CD4-positive, alpha-beta memory T cell (primary cell): ENCODE measurements at regions of chr3 and their contacts with region 1.

Region 1: GRCh38 chr3:16550676-16551341 is 37.3 kb upstream of the RFTN1 start:
- DNase-seq: peak; percentile 74 to 80 (median 78)
- H3K4me3 ChIP-seq: no peak overlapping the region
- H3K4me3 Mint-ChIP-seq: no peak overlapping the region
- H3K27ac ChIP-seq: no peak overlapping the region
- H3K27ac Mint-ChIP-seq: peak overlapping the region in 5 of 7 donors; percentile 11 to 84 (median 51)
- H3K4me1 ChIP-seq: no peaks in the 10 kb centered on the region
- H3K4me1 Mint-ChIP-seq: peaks cover 2 to 6% (median 3%) of the 10 kb centered on the region in 4 donors
- H3K27me3 ChIP-seq: no peaks in the 10 kb centered on the region
- H3K27me3 Mint-ChIP-seq: peaks cover 6 to 14% of the 10 kb centered on the region in 2 donors

Region 2: DNA sequence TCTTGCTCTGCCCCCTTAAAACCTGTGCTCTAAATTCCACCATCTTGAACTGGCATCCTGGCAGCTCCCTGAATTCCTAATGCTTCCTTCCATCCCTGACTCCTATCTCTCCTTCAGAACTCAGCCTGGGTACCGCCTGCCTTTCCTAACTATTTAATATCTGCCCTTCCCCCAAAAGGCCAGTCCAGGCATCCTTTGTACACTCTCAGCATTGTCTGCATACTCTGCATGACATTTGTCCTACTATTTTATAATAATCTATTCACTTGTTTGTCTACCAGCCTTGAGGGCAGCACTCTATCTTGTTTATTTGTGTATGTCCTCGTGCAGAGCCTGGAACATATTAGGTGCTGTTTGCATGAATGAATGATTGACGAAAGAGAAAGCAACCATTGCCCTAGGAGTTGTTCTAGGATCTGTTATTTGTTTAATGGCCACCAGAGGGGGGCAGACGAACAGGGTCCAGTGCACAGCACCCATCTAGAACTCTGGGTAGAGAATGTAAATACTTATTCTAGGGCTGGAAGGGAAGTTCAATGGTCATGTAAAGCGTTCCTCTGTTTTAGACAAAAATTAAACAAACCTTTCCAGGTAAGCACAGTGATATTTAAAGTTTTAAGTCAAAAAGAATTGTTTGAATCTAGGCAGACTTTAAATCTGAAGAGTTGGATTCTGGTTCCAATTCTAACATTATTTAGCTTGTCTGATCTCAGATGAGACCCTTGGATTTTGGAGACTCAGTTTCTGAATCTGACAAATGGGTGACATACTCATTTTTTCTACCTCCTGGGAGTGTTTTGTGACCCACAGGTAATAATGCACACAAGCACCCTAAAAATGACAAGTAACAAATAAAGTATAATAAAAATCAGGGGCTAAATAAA is 502.1 kb before region 1 on chr3:
- CTCF ChIA-PET with region 1: interaction called, 6 read pairs
- POLR2A ChIA-PET with region 1: no interaction called
- intact Hi-C with region 1: loop called (anchors 1 kb)
- DNase-seq: peak in 4 of 5 donors; percentile 34 to 48 (median 41)
- H3K4me3 ChIP-seq: no peak overlapping the region
- H3K4me3 Mint-ChIP-seq: peak overlapping the region in 4 of 8 donors; percentile 41 to 75 (median 66)
- H3K27ac ChIP-seq: no peak overlapping the region
- H3K27ac Mint-ChIP-seq: no peak overlapping the region
- H3K4me1 ChIP-seq: no peaks in the 10 kb centered on the region
- H3K4me1 Mint-ChIP-seq: peaks cover 0 to 5% (median 2%) of the 10 kb centered on the region in 4 donors
- H3K27me3 ChIP-seq: no peaks in the 10 kb centered on the region
- H3K27me3 Mint-ChIP-seq: peaks cover 3% of the 10 kb centered on the region in 2 donors

Region 3: DNA sequence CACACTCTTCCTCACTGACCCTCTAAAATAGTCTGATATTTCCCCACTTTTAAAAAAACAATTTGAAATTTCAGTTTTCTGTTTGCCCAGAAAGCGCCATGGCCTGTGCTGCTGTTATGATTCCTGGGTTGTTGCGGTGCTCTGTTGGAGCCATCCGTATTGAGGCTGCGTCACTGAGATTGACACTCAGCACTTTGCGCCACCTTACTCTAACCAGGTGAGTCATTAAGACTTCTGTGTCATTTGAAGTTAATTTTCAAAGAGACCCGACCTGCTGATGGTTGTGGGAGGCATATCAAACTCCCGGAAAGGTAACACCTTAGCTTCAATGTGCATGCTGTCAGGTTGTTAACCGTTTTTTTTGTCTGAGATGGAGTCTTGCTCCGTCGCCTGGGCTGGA is 280.0 kb before region 1 on chr3:
- CTCF ChIA-PET with region 1: interaction called, 97 read pairs
- POLR2A ChIA-PET with region 1: no interaction called
- intact Hi-C with region 1: loop called (anchors 1 kb)
- DNase-seq: no peak
- H3K4me3 ChIP-seq: no peak overlapping the region
- H3K4me3 Mint-ChIP-seq: no peak overlapping the region
- H3K27ac ChIP-seq: no peak overlapping the region
- H3K27ac Mint-ChIP-seq: no peak overlapping the region
- H3K4me1 ChIP-seq: peaks cover 18% of the 10 kb centered on the region
- H3K4me1 Mint-ChIP-seq: peaks cover 12 to 18% (median 16%) of the 10 kb centered on the region in 4 donors
- H3K27me3 ChIP-seq: no peaks in the 10 kb centered on the region
- H3K27me3 Mint-ChIP-seq: no peaks in the 10 kb centered on the region

Region 4: DNA sequence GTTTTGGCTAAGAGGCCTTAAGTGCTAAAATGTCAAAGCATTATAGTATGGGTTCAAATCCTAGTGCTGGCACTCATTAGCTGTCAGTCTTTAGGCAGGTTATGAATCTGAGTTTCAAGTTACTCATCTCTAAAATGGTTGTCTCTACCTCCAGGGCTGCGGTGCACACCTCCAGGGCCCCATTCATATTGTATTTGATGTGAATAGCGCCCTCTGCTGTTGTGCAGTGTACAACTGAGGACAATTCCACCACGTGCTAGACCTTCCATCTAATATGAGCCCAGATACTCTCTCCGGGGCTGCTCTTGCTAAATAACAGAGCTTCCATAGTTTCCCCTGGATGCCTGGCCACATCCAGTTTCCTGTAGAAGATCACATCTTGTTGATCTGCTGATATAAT is 231.5 kb before region 1 on chr3:
- CTCF ChIA-PET with region 1: interaction called, 8 read pairs
- POLR2A ChIA-PET with region 1: no interaction called
- intact Hi-C with region 1: loop called (anchors 1 kb)
- DNase-seq: peak; percentile 79 to 89 (median 81)
- H3K4me3 ChIP-seq: no peak overlapping the region
- H3K4me3 Mint-ChIP-seq: peak overlapping the region in 6 of 8 donors; percentile 17 to 80 (median 36)
- H3K27ac ChIP-seq: peak overlapping the region; percentile 31
- H3K27ac Mint-ChIP-seq: peak overlapping the region; percentile 87 to 95 (median 93)
- H3K4me1 ChIP-seq: peaks cover 61% of the 10 kb centered on the region
- H3K4me1 Mint-ChIP-seq: peaks cover 53 to 79% (median 63%) of the 10 kb centered on the region in 4 donors
- H3K27me3 ChIP-seq: no peaks in the 10 kb centered on the region
- H3K27me3 Mint-ChIP-seq: no peaks in the 10 kb centered on the region

Region 5: GRCh38 chr3:16589867-16590624 is 39.2 kb after region 1 on chr3:
- CTCF ChIA-PET with region 1: no interaction called
- POLR2A ChIA-PET with region 1: no interaction called
- intact Hi-C with region 1: no loop called
- DNase-seq: no peak
- H3K4me3 ChIP-seq: no peak overlapping the region
- H3K4me3 Mint-ChIP-seq: no peak overlapping the region
- H3K27ac ChIP-seq: no peak overlapping the region
- H3K27ac Mint-ChIP-seq: peak overlapping the region in 1 of 7 donors; percentile 28
- H3K4me1 ChIP-seq: no peaks in the 10 kb centered on the region
- H3K4me1 Mint-ChIP-seq: peaks cover 0 to 10% (median 2%) of the 10 kb centered on the region in 4 donors
- H3K27me3 ChIP-seq: no peaks in the 10 kb centered on the region
- H3K27me3 Mint-ChIP-seq: peaks cover 1 to 5% of the 10 kb centered on the region in 2 donors